ENCODE measurements at regions of chr3 and their contacts with region 1.

Region 1: DNA sequence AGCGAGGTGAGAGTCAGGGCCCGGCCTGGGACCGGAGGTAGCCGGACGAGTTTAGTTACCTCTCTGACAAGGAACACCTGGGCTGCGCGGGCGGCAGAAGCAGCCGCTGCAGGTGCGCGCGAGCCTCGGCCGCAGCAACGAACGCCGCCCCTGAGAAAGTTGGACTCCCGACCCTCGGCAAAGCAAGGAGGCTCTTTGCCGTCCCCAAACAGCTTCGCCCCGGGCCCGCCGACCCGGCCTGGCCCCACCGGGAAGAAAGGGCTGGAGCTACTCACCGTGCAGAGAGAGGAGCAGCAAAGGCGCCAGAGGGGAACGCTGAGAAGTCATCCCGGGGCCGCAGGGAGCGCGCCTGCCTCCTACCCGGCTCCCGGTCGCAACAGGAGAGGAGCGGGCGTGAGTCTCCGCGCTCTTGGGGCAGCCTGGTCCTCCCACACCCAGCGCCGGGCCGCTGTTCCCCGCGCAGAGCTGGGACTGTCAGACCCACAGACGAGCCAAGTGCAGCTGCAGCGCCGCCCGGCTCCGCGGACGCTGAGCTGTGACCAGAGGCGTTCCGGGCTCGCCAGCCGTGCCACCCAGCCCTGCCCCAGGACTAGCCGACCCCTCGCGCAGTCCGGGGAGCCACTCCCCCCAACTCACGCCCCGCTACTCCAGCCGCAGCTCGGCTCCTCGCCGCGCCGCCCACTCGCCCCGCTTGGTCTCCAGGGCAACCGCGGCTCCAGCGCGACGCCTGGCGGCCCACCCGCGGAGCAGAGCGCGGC is at the start of gene IGSF11:
- DNase-seq: peak; percentile 33 to 81 (median 64)
- ATAC-seq: peak; percentile 89
- H3K4me3 ChIP-seq: peak within 1 kb of the TSS; percentile 58 to 64
- H3K4me3 Mint-ChIP-seq: peak within 1 kb of the TSS; percentile 90
- H3K27ac ChIP-seq: peak within 1 kb of the TSS in 1 of 2 experiments; percentile 22
- H3K27ac Mint-ChIP-seq: no peak within 1 kb of the TSS
- H3K4me1 ChIP-seq: peaks cover 6% of the 10 kb centered on the region
- H3K4me1 Mint-ChIP-seq: peaks cover 15% of the 10 kb centered on the region
- H3K27me3 ChIP-seq: peaks cover 0 to 14% of the 10 kb centered on the region in 2 experiments
- H3K27me3 Mint-ChIP-seq: peaks cover 29% of the 10 kb centered on the region
- CTCF ChIP-seq: peak; percentile 67
- total RNA-seq, gene IGSF11: 0.57 to 0.86 TPM

Region 2: GRCh38 chr3:118705487-118706219 is 328.8 kb before region 1 on chr3:
- CTCF ChIA-PET with region 1: no interaction called
- POLR2A ChIA-PET with region 1: no interaction called
- intact Hi-C with region 1: no loop called
- DNase-seq: no peak
- ATAC-seq: no peak
- H3K4me3 ChIP-seq: no peak overlapping the region
- H3K4me3 Mint-ChIP-seq: no peak overlapping the region
- H3K27ac ChIP-seq: no peak overlapping the region
- H3K27ac Mint-ChIP-seq: no peak overlapping the region
- H3K4me1 ChIP-seq: no peaks in the 10 kb centered on the region
- H3K4me1 Mint-ChIP-seq: no peaks in the 10 kb centered on the region
- H3K27me3 ChIP-seq: no peaks in the 10 kb centered on the region
- H3K27me3 Mint-ChIP-seq: no peaks in the 10 kb centered on the region
- CTCF ChIP-seq: no peak

Region 3: GRCh38 chr3:118890186-118890585 is 144.2 kb before region 1 on chr3:
- CTCF ChIA-PET with region 1: interaction called, 362 read pairs
- POLR2A ChIA-PET with region 1: interaction called, 24 read pairs
- intact Hi-C with region 1: loop called in 1 of 2 experiments (anchors 1 kb)
- DNase-seq: no peak
- ATAC-seq: no peak
- H3K4me3 ChIP-seq: no peak overlapping the region
- H3K4me3 Mint-ChIP-seq: no peak overlapping the region
- H3K27ac ChIP-seq: no peak overlapping the region
- H3K27ac Mint-ChIP-seq: no peak overlapping the region
- H3K4me1 ChIP-seq: no peaks in the 10 kb centered on the region
- H3K4me1 Mint-ChIP-seq: peaks cover 3% of the 10 kb centered on the region
- H3K27me3 ChIP-seq: peaks cover 0 to 3% of the 10 kb centered on the region in 2 experiments
- H3K27me3 Mint-ChIP-seq: peaks cover 18% of the 10 kb centered on the region
- CTCF ChIP-seq: no peak

Region 4: DNA sequence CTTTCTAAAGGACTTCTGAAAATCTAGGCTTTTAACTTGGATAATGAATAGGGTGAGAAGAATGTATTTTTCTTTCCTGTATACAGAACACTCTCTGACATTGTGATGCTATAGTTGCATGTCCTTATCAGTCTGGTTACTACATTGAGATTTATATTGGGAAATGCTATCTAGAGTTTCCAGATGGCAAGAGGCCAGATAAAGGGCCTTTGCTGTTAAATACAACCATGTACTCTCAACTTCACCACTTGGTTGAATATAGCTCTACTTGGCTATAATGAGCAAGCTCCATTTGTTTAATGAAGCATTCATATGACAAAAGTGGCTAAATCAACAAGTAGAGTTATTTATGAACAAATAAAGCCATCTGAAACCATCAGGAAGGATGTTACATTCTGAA is 90.8 kb before region 1 on chr3:
- CTCF ChIA-PET with region 1: interaction called, 10 read pairs
- POLR2A ChIA-PET with region 1: interaction called, 5 read pairs
- intact Hi-C with region 1: loop called (anchors 5 kb)
- DNase-seq: no peak
- ATAC-seq: no peak
- H3K4me3 ChIP-seq: no peak overlapping the region
- H3K4me3 Mint-ChIP-seq: no peak overlapping the region
- H3K27ac ChIP-seq: no peak overlapping the region
- H3K27ac Mint-ChIP-seq: no peak overlapping the region
- H3K4me1 ChIP-seq: peaks cover 35% of the 10 kb centered on the region
- H3K4me1 Mint-ChIP-seq: peaks cover 52% of the 10 kb centered on the region
- H3K27me3 ChIP-seq: no peaks in the 10 kb centered on the region
- H3K27me3 Mint-ChIP-seq: no peaks in the 10 kb centered on the region
- CTCF ChIP-seq: no peak

Region 5: DNA sequence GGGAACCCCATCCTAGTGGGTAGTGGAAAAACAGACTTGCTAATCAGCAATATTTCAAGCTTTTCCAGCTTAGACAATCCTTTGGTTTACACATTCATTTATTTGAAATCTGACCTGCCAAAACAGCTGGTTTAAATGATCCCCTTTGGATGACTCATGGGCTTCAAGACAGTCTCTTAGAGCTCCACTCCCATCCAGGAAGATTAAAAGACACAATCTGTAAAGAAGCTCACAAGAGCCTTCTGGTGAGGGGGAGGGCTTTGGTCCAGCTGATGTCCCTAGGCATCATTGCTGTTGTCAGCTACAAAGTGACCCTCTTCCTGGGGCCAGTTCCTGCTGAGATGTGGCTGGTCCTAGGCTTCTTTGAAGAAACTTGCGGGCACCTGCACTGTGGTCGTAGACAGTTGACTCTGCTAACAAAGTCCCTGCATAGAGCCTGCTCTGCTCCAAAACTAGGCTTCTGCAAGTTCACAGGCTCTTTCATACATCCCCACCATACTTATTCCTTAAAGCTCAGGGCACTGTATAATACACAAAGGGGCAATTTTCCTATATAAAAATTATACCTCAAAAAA is 73.5 kb before region 1 on chr3:
- CTCF ChIA-PET with region 1: interaction called, 17 read pairs
- POLR2A ChIA-PET with region 1: interaction called, 4 read pairs
- intact Hi-C with region 1: no loop called
- DNase-seq: no peak
- ATAC-seq: no peak
- H3K4me3 ChIP-seq: no peak overlapping the region
- H3K4me3 Mint-ChIP-seq: no peak overlapping the region
- H3K27ac ChIP-seq: no peak overlapping the region
- H3K27ac Mint-ChIP-seq: no peak overlapping the region
- H3K4me1 ChIP-seq: peaks cover 21% of the 10 kb centered on the region
- H3K4me1 Mint-ChIP-seq: peaks cover 22% of the 10 kb centered on the region
- H3K27me3 ChIP-seq: no peaks in the 10 kb centered on the region
- H3K27me3 Mint-ChIP-seq: no peaks in the 10 kb centered on the region
- CTCF ChIP-seq: no peak

Region 6: GRCh38 chr3:119240591-119241434 is 206.4 kb after region 1 on chr3 and contains the start of gene B4GALT4:
- CTCF ChIA-PET with region 1: interaction called, 13 read pairs
- POLR2A ChIA-PET with region 1: interaction called, 3 read pairs
- intact Hi-C with region 1: loop called in 1 of 2 experiments (anchors 5 kb)
- DNase-seq: peak; percentile 34 to 83 (median 63)
- ATAC-seq: peak; percentile 67
- H3K4me3 ChIP-seq: peak within 1 kb of the TSS; percentile 66 to 72
- H3K4me3 Mint-ChIP-seq: peak within 1 kb of the TSS; percentile 88
- H3K27ac ChIP-seq: peak within 1 kb of the TSS; percentile 58 to 67
- H3K27ac Mint-ChIP-seq: peak within 1 kb of the TSS; percentile 92
- H3K4me1 ChIP-seq: peaks cover 30% of the 10 kb centered on the region
- H3K4me1 Mint-ChIP-seq: peaks cover 40% of the 10 kb centered on the region
- H3K27me3 ChIP-seq: no peaks in the 10 kb centered on the region
- H3K27me3 Mint-ChIP-seq: no peaks in the 10 kb centered on the region
- CTCF ChIP-seq: no peak
- total RNA-seq, gene B4GALT4: 18.2 to 18.6 TPM